ENCODE measurements at regions of chr13 and their contacts with region 1.

Region 1: DNA sequence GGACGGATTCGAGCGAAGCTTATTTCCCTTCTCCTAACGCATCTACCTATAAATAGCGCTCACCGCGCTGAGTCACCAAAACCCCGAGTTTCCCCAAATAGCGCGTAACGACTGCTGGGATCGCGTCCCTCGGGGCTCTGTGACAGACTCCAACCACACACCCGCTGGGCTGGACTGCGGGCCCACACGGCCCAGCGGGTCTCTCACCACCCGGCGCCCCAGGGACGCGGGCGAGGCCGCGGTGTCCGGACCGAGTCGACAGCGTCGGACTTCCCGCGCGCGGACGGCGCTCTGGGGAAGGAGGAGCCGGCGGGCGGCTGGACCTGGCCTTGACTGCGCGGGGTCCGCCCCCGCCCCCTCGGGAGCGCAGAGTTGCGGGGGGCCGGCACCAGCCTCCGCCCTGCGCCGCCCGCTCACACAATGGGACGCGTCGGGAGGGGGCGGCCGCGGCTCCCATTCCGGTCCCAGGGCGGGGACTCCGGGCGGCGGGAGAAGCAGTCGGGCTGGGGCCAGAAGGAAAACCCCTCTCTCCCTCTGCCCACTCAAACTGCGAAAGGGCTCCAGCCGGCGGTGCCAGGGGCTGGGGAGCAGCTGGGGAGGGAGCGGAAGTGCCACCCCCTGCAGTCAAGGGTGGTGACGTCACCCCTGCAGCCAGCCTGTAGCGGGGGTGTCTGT is 108.8 kb downstream of the KCNRG start:
- DNase-seq: peak; percentile 82 to 89
- ATAC-seq: peak; percentile 65 to 88 (median 77)
- H3K4me3 ChIP-seq: peak overlapping the region; percentile 60
- H3K4me3 Mint-ChIP-seq: peak overlapping the region; percentile 91
- H3K27ac ChIP-seq: peak overlapping the region; percentile 95
- H3K27ac Mint-ChIP-seq: peak overlapping the region; percentile 93 to 98
- H3K4me1 ChIP-seq: peaks cover 32% of the 10 kb centered on the region
- H3K4me1 Mint-ChIP-seq: peaks cover 39 to 42% of the 10 kb centered on the region in 2 donors
- H3K27me3 ChIP-seq: peaks cover 1% of the 10 kb centered on the region
- H3K27me3 Mint-ChIP-seq: peaks cover 4 to 8% of the 10 kb centered on the region in 2 donors
- CTCF ChIP-seq: no peak

Region 2: GRCh38 chr13:49792550-49793324 is 331.3 kb before region 1 on chr13 and contains the start of gene KPNA3:
- intact Hi-C with region 1: loop called (anchors 5 kb)
- DNase-seq: peak; percentile 90 to 98
- ATAC-seq: peak; percentile 87 to 96 (median 87)
- H3K4me3 ChIP-seq: peak within 1 kb of the TSS; percentile 66
- H3K4me3 Mint-ChIP-seq: peak within 1 kb of the TSS; percentile 94
- H3K27ac ChIP-seq: peak within 1 kb of the TSS; percentile 66
- H3K27ac Mint-ChIP-seq: peak within 1 kb of the TSS; percentile 95 to 96
- H3K4me1 ChIP-seq: peaks cover 14% of the 10 kb centered on the region
- H3K4me1 Mint-ChIP-seq: peaks cover 37 to 39% of the 10 kb centered on the region in 2 donors
- H3K27me3 ChIP-seq: no peaks in the 10 kb centered on the region
- H3K27me3 Mint-ChIP-seq: peaks cover 12 to 16% of the 10 kb centered on the region in 2 donors
- CTCF ChIP-seq: no peak
- total RNA-seq, gene KPNA3: 27.8 to 35.5 (median 29.8) TPM

Region 3: GRCh38 chr13:49908637-49909036 is 215.4 kb before region 1 on chr13:
- intact Hi-C with region 1: no loop called
- DNase-seq: no peak
- ATAC-seq: no peak
- H3K4me3 ChIP-seq: no peak overlapping the region
- H3K4me3 Mint-ChIP-seq: no peak overlapping the region
- H3K27ac ChIP-seq: no peak overlapping the region
- H3K27ac Mint-ChIP-seq: no peak overlapping the region
- H3K4me1 ChIP-seq: no peaks in the 10 kb centered on the region
- H3K4me1 Mint-ChIP-seq: no peaks in the 10 kb centered on the region
- H3K27me3 ChIP-seq: no peaks in the 10 kb centered on the region
- H3K27me3 Mint-ChIP-seq: no peaks in the 10 kb centered on the region
- CTCF ChIP-seq: no peak

Region 4: GRCh38 chr13:49936085-49936940 is 187.7 kb before region 1 on chr13 and contains the start of gene SPRYD7:
- intact Hi-C with region 1: loop called (anchors 5 kb)
- DNase-seq: peak; percentile 96 to 97
- ATAC-seq: peak; percentile 95 to 99 (median 97)
- H3K4me3 ChIP-seq: peak within 1 kb of the TSS; percentile 64
- H3K4me3 Mint-ChIP-seq: peak within 1 kb of the TSS; percentile 93
- H3K27ac ChIP-seq: peak within 1 kb of the TSS; percentile 46
- H3K27ac Mint-ChIP-seq: peak within 1 kb of the TSS; percentile 79 to 91
- H3K4me1 ChIP-seq: peaks cover 14% of the 10 kb centered on the region
- H3K4me1 Mint-ChIP-seq: peaks cover 17 to 20% of the 10 kb centered on the region in 2 donors
- H3K27me3 ChIP-seq: no peaks in the 10 kb centered on the region
- H3K27me3 Mint-ChIP-seq: no peaks in the 10 kb centered on the region
- CTCF ChIP-seq: peak; percentile 78
- total RNA-seq, gene SPRYD7: 3.0 to 6.2 (median 4.4) TPM

Region 5: DNA sequence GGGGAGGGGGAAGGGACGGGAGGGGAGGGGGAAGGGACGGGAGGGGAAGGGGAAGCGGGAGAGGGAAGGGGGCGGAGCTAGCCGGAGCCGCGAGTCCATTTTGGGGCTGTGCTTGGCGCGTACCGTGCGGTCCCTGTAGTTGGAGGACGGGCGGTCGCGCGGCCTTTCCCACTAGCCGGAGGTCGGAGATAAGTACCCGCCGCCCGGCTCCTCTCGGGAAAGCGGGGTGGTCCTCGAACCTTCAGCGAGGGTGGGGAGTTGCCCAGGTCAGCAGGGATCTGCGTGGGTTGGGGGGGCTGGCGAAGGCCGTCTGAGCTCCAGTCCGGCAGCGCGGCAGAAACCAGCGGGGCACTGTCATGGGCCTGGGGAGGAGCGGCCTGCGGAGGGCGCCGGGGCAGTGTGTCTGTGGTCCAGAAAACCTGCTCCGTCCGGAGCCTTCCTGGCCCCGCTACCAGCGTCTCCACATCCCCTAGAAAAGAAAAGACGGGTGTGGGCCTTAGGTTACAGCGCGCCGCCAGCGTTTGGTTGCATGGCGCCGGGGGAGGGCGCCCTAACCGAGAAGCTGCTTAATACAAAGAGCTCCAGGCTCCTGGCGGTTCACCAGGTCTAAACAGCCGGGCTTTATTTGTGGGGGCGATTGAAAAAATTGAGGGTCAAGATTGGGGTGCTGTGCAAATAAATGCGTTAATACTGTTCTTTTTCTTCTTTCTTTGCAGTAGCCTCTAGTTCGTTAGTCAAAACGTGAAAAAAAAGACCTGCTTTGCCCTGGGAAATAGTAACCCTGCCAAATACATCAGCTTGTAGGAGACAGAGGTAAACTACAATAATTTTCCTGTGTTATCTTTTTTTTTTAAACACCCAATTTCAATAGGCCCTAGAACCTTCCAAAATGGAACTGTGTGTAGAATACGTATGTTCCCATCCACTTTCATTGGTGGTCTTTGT is 126.8 kb before region 1 on chr13 and contains the start of gene TRIM13:
- intact Hi-C with region 1: loop called (anchors 5 kb)
- DNase-seq: peak; percentile 79 to 90
- ATAC-seq: peak; percentile 79 to 89 (median 84)
- H3K4me3 ChIP-seq: peak within 1 kb of the TSS; percentile 100
- H3K4me3 Mint-ChIP-seq: peak within 1 kb of the TSS; percentile 90
- H3K27ac ChIP-seq: peak within 1 kb of the TSS; percentile 99
- H3K27ac Mint-ChIP-seq: peak within 1 kb of the TSS; percentile 80 to 90
- H3K4me1 ChIP-seq: peaks cover 17% of the 10 kb centered on the region
- H3K4me1 Mint-ChIP-seq: peaks cover 18 to 35% of the 10 kb centered on the region in 2 donors
- H3K27me3 ChIP-seq: no peaks in the 10 kb centered on the region
- H3K27me3 Mint-ChIP-seq: no peaks in the 10 kb centered on the region
- CTCF ChIP-seq: peak; percentile 79
- total RNA-seq, gene TRIM13: 18.9 to 22.1 (median 20.6) TPM

Region 6: GRCh38 chr13:50236898-50237318 is 112.9 kb after region 1 on chr13:
- intact Hi-C with region 1: loop called (anchors 10 kb)
- DNase-seq: peak in 1 of 2 donors; percentile 79
- ATAC-seq: peak; percentile 91 to 98 (median 91)
- H3K4me3 ChIP-seq: peak overlapping the region; percentile 3
- H3K4me3 Mint-ChIP-seq: peak overlapping the region; percentile 78
- H3K27ac ChIP-seq: peak overlapping the region; percentile 50
- H3K27ac Mint-ChIP-seq: peak overlapping the region; percentile 84 to 85
- H3K4me1 ChIP-seq: peaks cover 5% of the 10 kb centered on the region
- H3K4me1 Mint-ChIP-seq: peaks cover 22 to 28% of the 10 kb centered on the region in 2 donors
- H3K27me3 ChIP-seq: no peaks in the 10 kb centered on the region
- H3K27me3 Mint-ChIP-seq: peaks cover 0 to 3% of the 10 kb centered on the region in 2 donors
- CTCF ChIP-seq: no peak